A549 (cell line): ENCODE measurements at regions of chr2 and their contacts with region 1.

Region 1: DNA sequence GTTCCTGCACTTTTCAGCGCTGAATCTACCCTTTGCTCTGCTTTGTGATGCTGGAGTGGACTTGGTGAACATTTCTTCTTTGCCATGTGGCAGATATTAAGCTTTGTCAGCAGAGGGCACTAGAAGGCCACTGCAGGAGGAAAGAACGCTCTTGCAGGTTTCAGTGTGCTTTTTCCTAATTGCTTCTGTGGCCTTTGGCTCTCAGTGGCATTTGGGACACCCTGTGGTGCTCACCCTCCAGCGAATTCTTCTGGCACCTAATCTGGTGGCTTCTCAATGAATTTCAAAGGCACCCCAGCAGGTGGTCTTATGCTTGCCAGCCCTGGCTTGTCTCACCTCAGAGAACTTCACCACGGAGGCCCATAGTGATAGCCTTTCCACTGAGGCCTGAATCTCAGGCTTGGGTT is 146.7 kb downstream of the MYO3B start:
- DNase-seq: peak; percentile 9 to 54
- ATAC-seq: peak; percentile 85
- H3K4me3 ChIP-seq: no peak overlapping the region
- H3K27ac ChIP-seq: no peak overlapping the region
- H3K4me1 ChIP-seq: no peaks in the 10 kb centered on the region
- CTCF ChIP-seq: peak; percentile 62
- EP300 ChIP-seq: no peak
- POLR2A ChIP-seq: no peak
- RAD21 ChIP-seq: peak; percentile 66 to 84

Region 2: DNA sequence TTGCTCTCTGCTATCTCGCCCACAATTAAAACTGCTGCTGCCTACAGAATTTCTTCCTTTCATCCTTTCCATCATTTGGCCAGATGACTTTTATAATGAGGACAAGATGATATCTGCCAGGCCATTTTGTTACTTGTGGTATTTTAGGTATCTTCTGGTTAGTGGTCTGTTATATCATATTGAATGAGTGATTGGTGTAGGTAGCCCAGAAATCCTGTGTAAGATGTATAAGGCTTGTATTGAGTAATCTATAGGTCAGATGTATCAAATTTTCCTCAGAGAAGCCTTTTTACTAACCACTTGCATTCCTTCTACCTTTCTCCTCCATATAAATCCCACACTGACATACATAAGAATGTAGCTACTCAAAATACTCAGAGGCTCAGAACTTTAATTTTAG is 379.1 kb before region 1 on chr2:
- CTCF ChIA-PET with region 1: no interaction called
- POLR2A ChIA-PET with region 1: no interaction called
- DNase-seq: no peak
- ATAC-seq: no peak
- H3K4me3 ChIP-seq: no peak overlapping the region
- H3K27ac ChIP-seq: no peak overlapping the region
- H3K4me1 ChIP-seq: no peaks in the 10 kb centered on the region
- CTCF ChIP-seq: no peak
- EP300 ChIP-seq: no peak
- POLR2A ChIP-seq: no peak
- RAD21 ChIP-seq: no peak

Region 3: GRCh38 chr2:170291474-170291873 is 33.2 kb before region 1 on chr2:
- CTCF ChIA-PET with region 1: no interaction called
- POLR2A ChIA-PET with region 1: no interaction called
- DNase-seq: no peak
- ATAC-seq: no peak
- H3K4me3 ChIP-seq: no peak overlapping the region
- H3K27ac ChIP-seq: no peak overlapping the region
- H3K4me1 ChIP-seq: no peaks in the 10 kb centered on the region
- CTCF ChIP-seq: no peak
- EP300 ChIP-seq: no peak
- POLR2A ChIP-seq: no peak
- RAD21 ChIP-seq: no peak

Region 4: GRCh38 chr2:170313347-170313991 is 11.2 kb before region 1 on chr2:
- CTCF ChIA-PET with region 1: interaction called, 10 read pairs
- POLR2A ChIA-PET with region 1: no interaction called
- DNase-seq: no peak
- ATAC-seq: no peak
- H3K4me3 ChIP-seq: no peak overlapping the region
- H3K27ac ChIP-seq: no peak overlapping the region
- H3K4me1 ChIP-seq: no peaks in the 10 kb centered on the region
- CTCF ChIP-seq: no peak
- EP300 ChIP-seq: no peak
- POLR2A ChIP-seq: no peak
- RAD21 ChIP-seq: no peak

Region 5: DNA sequence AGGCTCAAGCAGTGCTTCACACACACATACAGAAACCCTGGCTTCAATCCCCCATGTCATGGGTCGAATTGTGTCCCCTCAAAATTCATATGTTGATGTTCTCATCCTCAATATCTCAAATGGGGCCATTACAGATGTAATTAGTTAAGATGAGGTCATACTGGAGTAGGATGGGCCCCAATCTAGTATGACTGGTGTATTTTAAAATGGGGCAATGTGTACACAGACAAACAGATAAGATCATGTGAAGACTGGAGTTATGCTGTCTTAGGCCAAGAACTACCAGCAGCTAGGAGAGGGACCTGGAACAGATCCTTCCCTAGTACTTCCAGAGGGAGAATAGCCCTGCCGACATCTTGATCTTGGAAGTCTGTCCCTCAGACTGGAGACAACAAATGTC is 21.0 kb after region 1 on chr2:
- CTCF ChIA-PET with region 1: interaction called, 12 read pairs
- POLR2A ChIA-PET with region 1: no interaction called
- DNase-seq: no peak
- ATAC-seq: no peak
- H3K4me3 ChIP-seq: no peak overlapping the region
- H3K27ac ChIP-seq: no peak overlapping the region
- H3K4me1 ChIP-seq: no peaks in the 10 kb centered on the region
- CTCF ChIP-seq: no peak
- EP300 ChIP-seq: no peak
- POLR2A ChIP-seq: no peak
- RAD21 ChIP-seq: no peak

Region 6: GRCh38 chr2:170486730-170487129 is 162.1 kb after region 1 on chr2:
- CTCF ChIA-PET with region 1: no interaction called
- POLR2A ChIA-PET with region 1: no interaction called
- DNase-seq: no peak
- ATAC-seq: no peak
- H3K4me3 ChIP-seq: no peak overlapping the region
- H3K27ac ChIP-seq: no peak overlapping the region
- H3K4me1 ChIP-seq: no peaks in the 10 kb centered on the region
- CTCF ChIP-seq: no peak
- EP300 ChIP-seq: no peak
- POLR2A ChIP-seq: no peak
- RAD21 ChIP-seq: peak in 1 of 2 experiments; percentile 17; a peak in 1 of 5 replicates